Psoas muscle (tissue), 8 donors: ENCODE measurements at regions of chr14 and their contacts with region 1.

Region 1: GRCh38 chr14:89625244-89625713 is 208.2 kb upstream of the FOXN3 start:
- DNase-seq: peak; percentile 29 to 71
- ATAC-seq: peak; percentile 17 to 50 (median 37)
- H3K4me3 ChIP-seq: peak overlapping the region; percentile 20
- H3K27ac ChIP-seq: peak overlapping the region; percentile 46
- H3K4me1 ChIP-seq: peaks cover 16% of the 10 kb centered on the region
- H3K27me3 ChIP-seq: no peaks in the 10 kb centered on the region
- CTCF ChIP-seq: no peak

Region 2: GRCh38 chr14:89701211-89702043 is 76.1 kb after region 1 on chr14:
- intact Hi-C with region 1: loop called in 1 of 2 experiments (anchors 5 kb)
- DNase-seq: peak; percentile 89 to 94
- ATAC-seq: peak; percentile 93 to 97 (median 96)
- H3K4me3 ChIP-seq: peak overlapping the region; percentile 82
- H3K27ac ChIP-seq: peak overlapping the region; percentile 72
- H3K4me1 ChIP-seq: peaks cover 4% of the 10 kb centered on the region
- H3K27me3 ChIP-seq: no peaks in the 10 kb centered on the region
- CTCF ChIP-seq: no peak

Region 3: DNA sequence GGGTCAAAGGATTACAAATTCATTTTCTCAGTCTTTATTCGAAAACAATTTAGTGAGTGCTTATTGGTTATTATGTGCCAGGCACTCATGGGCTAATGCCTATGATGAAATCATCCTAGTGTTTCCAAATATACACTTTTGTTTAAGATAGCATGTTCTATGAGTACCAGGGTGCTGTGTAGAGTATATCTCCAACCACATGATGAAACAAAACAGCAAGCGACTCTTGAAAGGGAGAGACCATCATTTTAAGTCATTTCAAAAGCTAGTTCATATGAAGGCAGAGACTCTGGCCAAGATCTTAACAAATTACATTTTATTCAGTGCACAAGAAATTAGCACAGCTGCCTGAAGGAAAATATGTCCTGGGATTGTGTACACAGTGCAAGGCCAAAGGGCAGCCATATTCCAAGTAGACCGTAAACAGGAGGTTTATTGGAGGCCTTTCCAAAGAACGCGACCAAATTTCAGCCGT is 125.0 kb after region 1 on chr14:
- intact Hi-C with region 1: no loop called
- DNase-seq: no peak
- ATAC-seq: no peak
- H3K4me3 ChIP-seq: no peak overlapping the region
- H3K27ac ChIP-seq: no peak overlapping the region
- H3K4me1 ChIP-seq: no peaks in the 10 kb centered on the region
- H3K27me3 ChIP-seq: no peaks in the 10 kb centered on the region
- CTCF ChIP-seq: no peak